H1 (cell line): ENCODE measurements at regions of chr19 and their contacts with region 1.

Region 1: DNA sequence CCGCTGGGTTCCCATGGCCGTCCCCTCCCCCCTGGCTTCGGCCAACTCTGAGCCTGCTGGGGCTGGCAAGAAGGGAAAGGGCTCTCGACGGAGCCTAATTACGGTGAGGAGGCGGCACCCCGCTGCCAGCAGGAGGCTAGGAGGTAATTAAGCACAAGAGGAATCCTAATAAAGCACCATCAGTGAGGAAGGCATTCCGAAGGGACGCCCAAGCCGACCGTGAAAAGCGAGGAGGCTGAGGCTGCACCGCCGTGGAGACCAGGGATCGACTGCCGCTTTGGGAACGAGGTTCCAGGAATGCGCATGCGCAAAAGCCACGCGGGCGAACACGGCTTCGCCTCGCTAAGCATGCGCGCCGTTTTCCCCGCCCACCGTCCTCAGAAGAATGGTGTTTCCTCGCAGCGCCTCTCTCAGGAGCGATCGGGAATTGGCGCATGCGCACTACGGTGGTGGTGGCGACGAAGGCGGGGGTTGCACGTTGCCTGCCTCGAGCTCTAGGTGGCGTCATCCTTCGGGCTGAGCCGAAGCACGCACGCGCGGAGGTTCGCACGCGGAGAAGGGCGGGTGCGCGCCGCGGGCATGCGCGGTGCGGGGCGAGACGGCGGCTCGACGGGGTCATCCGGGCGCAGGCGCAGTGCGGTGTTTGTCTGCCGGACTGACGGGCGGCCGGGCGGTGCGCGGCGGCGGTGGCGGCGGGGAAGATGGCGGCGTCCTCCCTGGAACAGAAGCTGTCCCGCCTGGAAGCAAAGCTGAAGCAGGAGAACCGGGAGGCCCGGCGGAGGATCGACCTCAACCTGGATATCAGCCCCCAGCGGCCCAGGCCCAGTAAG is at the start of gene MAP2K7:
- DNase-seq: peak; percentile 100
- H3K4me3 ChIP-seq: peak within 1 kb of the TSS; percentile 45 to 91 (median 82)
- H3K27ac ChIP-seq: peak within 1 kb of the TSS; percentile 74; the same call in 1 of the 2 replicates
- H3K4me1 ChIP-seq: peaks cover 0 to 13% (median 7%) of the 10 kb centered on the region in 4 experiments; a peak in 5 of 7 replicates
- H3K27me3 ChIP-seq: no peaks in the 10 kb centered on the region
- CTCF ChIP-seq: peak; percentile 83 to 95 (median 94)
- EP300 ChIP-seq: no peak
- POLR2A ChIP-seq: peak in 1 of 2 experiments; percentile 92; a peak in 2 of 3 replicates
- RAD21 ChIP-seq: peak; percentile 38 to 48; a peak in 3 of 4 replicates
- total RNA-seq, gene MAP2K7: 38.3 and 41.5 TPM in 2 replicates

Region 2: GRCh38 chr19:7769171-7769570 is 134.3 kb before region 1 on chr19:
- CTCF ChIA-PET with region 1: no interaction called
- POLR2A ChIA-PET with region 1: no interaction called
- DNase-seq: no peak
- H3K4me3 ChIP-seq: no peak overlapping the region
- H3K27ac ChIP-seq: no peak overlapping the region
- H3K4me1 ChIP-seq: 0 out of 7 replicates have a peak, but pooled peaks cover 0 to 2% (median 0%) of the 10 kb centered on the region in 4 experiments
- H3K27me3 ChIP-seq: peaks cover 0 to 2% (median 0%) of the 10 kb centered on the region in 4 experiments; a peak in 1 of 7 replicates
- CTCF ChIP-seq: no peak
- EP300 ChIP-seq: no peak
- POLR2A ChIP-seq: no peak
- RAD21 ChIP-seq: no peak

Region 3: GRCh38 chr19:7852851-7853769 is 50.3 kb before region 1 on chr19:
- CTCF ChIA-PET with region 1: interaction called, 14 read pairs
- POLR2A ChIA-PET with region 1: interaction called, 6 read pairs
- DNase-seq: peak in 1 of 2 experiments; percentile 97
- H3K4me3 ChIP-seq: peak overlapping the region in 2 of 4 experiments; percentile 19 to 48; a peak in 4 of 8 replicates
- H3K27ac ChIP-seq: no peak overlapping the region
- H3K4me1 ChIP-seq: peaks cover 0 to 14% (median 6%) of the 10 kb centered on the region in 4 experiments; a peak in 5 of 7 replicates
- H3K27me3 ChIP-seq: peaks cover 0 to 2% (median 0%) of the 10 kb centered on the region in 4 experiments; a peak in 1 of 7 replicates
- CTCF ChIP-seq: peak; percentile 84 to 85 (median 85)
- EP300 ChIP-seq: no peak
- POLR2A ChIP-seq: no peak
- RAD21 ChIP-seq: peak; percentile 86 to 89

Region 4: GRCh38 chr19:7868676-7869452 is 34.6 kb before region 1 on chr19:
- CTCF ChIA-PET with region 1: interaction called, 8 read pairs
- POLR2A ChIA-PET with region 1: interaction called, 10 read pairs
- DNase-seq: peak; percentile 82 to 97
- H3K4me3 ChIP-seq: peak overlapping the region; percentile 26 to 61 (median 44)
- H3K27ac ChIP-seq: no peak overlapping the region; the same call in 1 of the 2 replicates
- H3K4me1 ChIP-seq: peaks cover 0 to 26% (median 14%) of the 10 kb centered on the region in 4 experiments; a peak in 5 of 7 replicates
- H3K27me3 ChIP-seq: peaks cover 2 to 33% (median 22%) of the 10 kb centered on the region in 4 experiments
- CTCF ChIP-seq: peak; percentile 80 to 86 (median 81)
- EP300 ChIP-seq: no peak
- POLR2A ChIP-seq: no peak; a peak in 2 of 3 replicates
- RAD21 ChIP-seq: peak in 1 of 2 experiments; percentile 46; a peak in 1 of 4 replicates

Region 5: GRCh38 chr19:7874076-7874896 is 29.2 kb before region 1 on chr19 and contains the start of gene PRR36:
- CTCF ChIA-PET with region 1: interaction called, 12 read pairs
- POLR2A ChIA-PET with region 1: interaction called, 10 read pairs
- DNase-seq: peak in 1 of 2 experiments; percentile 93
- H3K4me3 ChIP-seq: peak within 1 kb of the TSS; percentile 67 to 98 (median 70)
- H3K27ac ChIP-seq: 0 out of 2 replicates have a peak within 1 kb of the TSS, but pooled peaks have one; percentile 46
- H3K4me1 ChIP-seq: peaks cover 0 to 17% (median 12%) of the 10 kb centered on the region in 4 experiments; a peak in 5 of 7 replicates
- H3K27me3 ChIP-seq: peaks cover 0 to 7% (median 5%) of the 10 kb centered on the region in 4 experiments; a peak in 3 of 7 replicates
- CTCF ChIP-seq: no peak; a peak in 1 of 4 replicates
- EP300 ChIP-seq: no peak
- POLR2A ChIP-seq: no peak
- RAD21 ChIP-seq: peak; percentile 13 to 47; a peak in 2 of 4 replicates
- total RNA-seq, gene PRR36: 23.9 and 25.3 TPM in 2 replicates

Region 6: DNA sequence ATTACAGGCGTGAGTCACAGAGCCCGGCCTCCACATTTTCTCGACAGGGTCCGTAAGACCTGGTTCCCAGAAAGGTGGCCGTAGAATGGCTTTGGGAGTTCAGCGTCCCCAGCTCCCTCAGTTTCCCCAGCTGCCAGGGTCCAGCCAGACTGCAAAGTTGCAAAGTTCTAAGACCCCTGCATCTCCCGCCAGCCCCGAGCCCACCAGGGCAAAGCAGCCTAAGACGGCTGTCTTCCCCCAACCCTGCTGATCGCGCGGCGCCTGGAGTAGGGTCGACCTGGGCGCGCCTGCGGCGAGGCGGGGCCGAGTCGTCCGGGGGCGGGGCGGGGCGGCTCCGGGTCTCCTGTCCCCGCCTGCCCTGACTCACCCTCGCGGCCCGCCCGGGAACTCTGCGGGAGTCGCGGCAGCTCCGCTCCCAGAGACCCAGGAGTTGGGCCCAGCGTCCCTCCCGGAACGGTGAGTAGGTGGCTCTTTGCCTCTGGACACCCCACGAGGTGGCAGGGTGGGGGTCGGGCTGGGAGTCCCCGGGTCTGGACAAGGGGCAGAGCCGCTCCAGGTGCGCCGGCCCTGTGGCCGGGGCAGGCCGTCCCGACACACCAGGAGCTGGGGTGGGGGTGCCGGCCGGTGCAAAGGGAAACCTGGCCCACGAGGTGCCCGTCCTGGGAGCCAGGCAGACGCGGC is 15.2 kb before region 1 on chr19 and contains the start of gene LRRC8E:
- CTCF ChIA-PET with region 1: interaction called, 21 read pairs
- POLR2A ChIA-PET with region 1: interaction called, 7 read pairs
- DNase-seq: peak in 1 of 2 experiments; percentile 92
- H3K4me3 ChIP-seq: peak within 1 kb of the TSS; percentile 51 to 69 (median 57)
- H3K27ac ChIP-seq: no peak within 1 kb of the TSS
- H3K4me1 ChIP-seq: peaks cover 0 to 7% (median 5%) of the 10 kb centered on the region in 4 experiments; a peak in 4 of 7 replicates
- H3K27me3 ChIP-seq: peaks cover 0 to 4% (median 3%) of the 10 kb centered on the region in 4 experiments; a peak in 4 of 7 replicates
- CTCF ChIP-seq: no peak
- EP300 ChIP-seq: no peak
- POLR2A ChIP-seq: no peak
- RAD21 ChIP-seq: no peak
- total RNA-seq, gene LRRC8E: 2.9 and 3.4 TPM in 2 replicates

Region 7: DNA sequence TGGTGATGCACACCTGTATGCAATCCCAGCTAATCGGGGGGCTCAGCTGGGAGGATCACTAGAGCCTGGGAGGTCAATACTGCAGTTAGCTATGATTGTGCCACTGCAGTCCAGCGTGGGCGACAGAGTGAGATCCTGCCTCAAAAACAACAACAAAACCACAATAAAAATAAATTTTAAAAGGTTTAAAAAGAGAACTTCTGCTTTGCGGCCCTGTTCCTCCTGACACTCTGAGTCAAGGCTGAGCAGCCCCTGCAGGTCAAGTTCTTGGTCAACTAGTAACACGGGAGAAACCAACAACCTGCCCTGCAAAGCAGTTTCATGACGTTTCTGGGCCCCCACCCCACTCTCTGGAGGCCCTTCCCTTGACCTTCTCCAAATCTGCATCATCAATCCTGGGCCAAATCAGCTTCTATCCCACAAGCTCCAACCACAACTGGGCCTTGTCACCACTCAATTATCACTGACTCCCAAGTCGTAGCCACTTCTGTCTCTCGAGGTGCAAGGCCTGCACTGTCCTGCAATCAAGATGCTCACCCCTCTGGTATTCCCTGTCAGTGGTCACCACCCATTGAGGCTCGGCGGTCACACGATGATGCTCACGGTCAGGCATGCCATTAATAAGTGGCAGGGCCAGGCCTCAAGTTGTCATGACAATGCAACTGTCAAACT is 94.5 kb after region 1 on chr19:
- CTCF ChIA-PET with region 1: no interaction called
- POLR2A ChIA-PET with region 1: no interaction called
- DNase-seq: no peak
- H3K4me3 ChIP-seq: no peak overlapping the region
- H3K27ac ChIP-seq: no peak overlapping the region
- H3K4me1 ChIP-seq: peaks cover 6 to 7% (median 6%) of the 10 kb centered on the region in 4 experiments
- H3K27me3 ChIP-seq: no peaks in the 10 kb centered on the region
- CTCF ChIP-seq: no peak
- EP300 ChIP-seq: no peak
- POLR2A ChIP-seq: no peak
- RAD21 ChIP-seq: no peak